Activated CD4-positive, alpha-beta T cell treated with anti-CD3 and anti-CD28 coated beads, Interleukin-2, amount 10 ng/mL, durations not matched to agents 24 days and 14 days (primary cell): ENCODE measurements at regions of chr3 and their contacts with region 1.

Region 1: GRCh38 chr3:31288641-31289100 is 244.1 kb upstream of the STT3B start:
- DNase-seq: peak; percentile 85
- H3K4me3 Mint-ChIP-seq: peak overlapping the region; percentile 33
- H3K27ac Mint-ChIP-seq: peak overlapping the region; percentile 69
- H3K4me1 Mint-ChIP-seq: peaks cover 41% of the 10 kb centered on the region
- H3K27me3 Mint-ChIP-seq: peaks cover 2% of the 10 kb centered on the region

Region 2: GRCh38 chr3:31166249-31166885 is 122.3 kb before region 1 on chr3:
- intact Hi-C with region 1: no loop called
- DNase-seq: no peak
- H3K4me3 Mint-ChIP-seq: no peak overlapping the region
- H3K27ac Mint-ChIP-seq: no peak overlapping the region
- H3K4me1 Mint-ChIP-seq: peaks cover 11% of the 10 kb centered on the region
- H3K27me3 Mint-ChIP-seq: no peaks in the 10 kb centered on the region

Region 3: GRCh38 chr3:31219131-31219843 is 69.4 kb before region 1 on chr3:
- intact Hi-C with region 1: loop called (anchors 10 kb)
- DNase-seq: no peak
- H3K4me3 Mint-ChIP-seq: no peak overlapping the region
- H3K27ac Mint-ChIP-seq: no peak overlapping the region
- H3K4me1 Mint-ChIP-seq: peaks cover 74% of the 10 kb centered on the region
- H3K27me3 Mint-ChIP-seq: no peaks in the 10 kb centered on the region

Region 4: DNA sequence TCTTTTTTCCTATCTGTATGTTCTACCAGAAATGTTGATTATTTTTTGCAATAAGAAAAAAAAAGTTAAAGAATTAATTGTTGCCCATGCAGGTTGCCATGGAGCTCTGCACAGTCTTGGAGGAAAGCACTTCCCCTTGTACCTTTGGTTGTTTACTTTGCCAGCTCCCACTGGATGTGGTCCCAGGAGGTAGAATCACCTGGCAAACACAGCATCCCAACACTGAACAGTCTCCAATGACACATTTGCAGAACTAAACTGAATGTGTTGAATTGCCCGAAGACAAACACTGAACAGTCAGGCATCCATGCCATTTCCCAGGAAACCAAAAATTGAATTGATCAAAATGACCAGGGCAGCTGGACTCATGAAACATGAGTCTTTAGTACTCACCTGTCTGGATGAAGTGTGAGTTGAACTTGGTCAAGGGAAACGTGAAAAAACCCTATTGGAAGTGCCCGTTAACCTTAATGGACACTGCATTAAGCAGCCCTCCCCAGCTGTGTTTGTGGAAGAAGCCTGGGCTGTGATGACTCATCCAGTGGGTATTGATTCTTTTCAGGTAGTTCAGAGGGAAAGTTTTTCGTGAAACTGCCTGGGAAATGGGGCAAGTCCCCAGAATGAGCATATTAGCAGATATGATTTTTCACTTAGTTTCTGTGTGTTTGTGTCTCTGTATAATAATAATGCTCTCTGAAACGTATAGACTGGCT is 40.7 kb before region 1 on chr3:
- intact Hi-C with region 1: loop called (anchors 2 kb)
- DNase-seq: no peak
- H3K4me3 Mint-ChIP-seq: no peak overlapping the region
- H3K27ac Mint-ChIP-seq: peak overlapping the region; percentile 31
- H3K4me1 Mint-ChIP-seq: peaks cover 48% of the 10 kb centered on the region
- H3K27me3 Mint-ChIP-seq: no peaks in the 10 kb centered on the region

Region 5: DNA sequence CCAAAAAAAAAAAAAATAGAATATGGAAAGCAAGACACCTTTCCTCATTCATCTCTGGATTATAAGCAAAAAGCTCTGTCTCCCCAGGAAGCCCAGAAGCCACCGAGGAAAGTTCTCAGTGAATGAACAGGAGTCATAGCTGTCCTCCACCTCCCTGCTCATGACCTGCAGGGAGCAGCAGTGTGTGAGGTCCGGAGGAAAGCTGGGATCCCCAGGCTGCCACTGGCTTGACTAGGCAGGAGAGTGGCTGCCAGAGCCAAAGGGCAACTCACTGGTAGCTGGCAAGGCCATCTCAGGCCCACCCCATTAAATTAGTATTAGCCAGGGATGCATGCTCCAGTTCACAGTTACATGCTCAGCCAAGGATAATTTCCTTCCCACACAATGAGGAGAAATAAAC is 52.5 kb after region 1 on chr3:
- intact Hi-C with region 1: loop called (anchors 10 kb)
- DNase-seq: peak; percentile 21
- H3K4me3 Mint-ChIP-seq: no peak overlapping the region
- H3K27ac Mint-ChIP-seq: no peak overlapping the region
- H3K4me1 Mint-ChIP-seq: no peaks in the 10 kb centered on the region
- H3K27me3 Mint-ChIP-seq: no peaks in the 10 kb centered on the region